HepG2 (cell line): ENCODE measurements at regions of chr10 and their contacts with region 1.

Region 1: GRCh38 chr10:111084366-111085255 is 7.8 kb downstream of the ADRA2A start:
- DNase-seq: no peak
- ATAC-seq: no peak
- H3K4me3 ChIP-seq: no peak overlapping the region
- H3K27ac ChIP-seq: no peak overlapping the region
- H3K4me1 ChIP-seq: no peaks in the 10 kb centered on the region
- H3K27me3 ChIP-seq: no peaks in the 10 kb centered on the region; a peak in 3 of 5 replicates
- CTCF ChIP-seq: no peak
- EP300 ChIP-seq: no peak
- POLR2A ChIP-seq: no peak
- RAD21 ChIP-seq: no peak

Region 2: GRCh38 chr10:111281516-111281915 is 196.9 kb after region 1 on chr10:
- CTCF ChIA-PET with region 1: no interaction called
- POLR2A ChIA-PET with region 1: no interaction called
- in situ Hi-C with region 1: no loop called
- intact Hi-C with region 1: loop called (anchors 10 kb)
- DNase-seq: peak; percentile 3
- ATAC-seq: peak; percentile 68; the same call in 2 of the 3 replicates
- H3K4me3 ChIP-seq: no peak overlapping the region
- H3K27ac ChIP-seq: no peak overlapping the region
- H3K4me1 ChIP-seq: no peaks in the 10 kb centered on the region
- H3K27me3 ChIP-seq: no peaks in the 10 kb centered on the region
- CTCF ChIP-seq: no peak
- EP300 ChIP-seq: no peak
- POLR2A ChIP-seq: no peak
- RAD21 ChIP-seq: no peak